ENCODE measurements at regions of chr7 and their contacts with region 1.

Region 1: DNA sequence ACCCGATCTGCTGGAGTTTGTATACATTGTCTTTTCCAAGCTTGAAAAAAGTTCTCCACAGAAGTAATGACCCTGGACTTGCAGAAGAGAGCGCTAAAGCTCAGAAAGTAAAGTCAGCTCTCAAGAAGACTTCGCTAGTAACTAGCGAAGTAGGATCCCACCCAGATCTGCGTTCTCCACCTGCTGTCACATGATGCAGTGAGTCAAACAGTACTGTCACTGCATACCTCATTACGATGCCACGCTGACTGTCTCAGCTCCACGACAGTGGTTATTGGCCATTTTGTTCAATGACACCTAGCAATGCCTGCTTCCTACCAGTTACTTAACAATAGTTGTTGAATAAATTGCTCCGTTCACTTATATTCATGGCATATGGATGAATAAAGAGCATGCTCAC is 29.7 kb upstream of the SEC61G start:
- DNase-seq: peak; percentile 95
- ATAC-seq: peak; percentile 95
- H3K4me3 ChIP-seq: 0 out of 2 replicates have a peak overlapping the region, but pooled peaks have one; percentile 20
- H3K27ac ChIP-seq: peak overlapping the region; percentile 60
- H3K4me1 ChIP-seq: peaks cover 22% of the 10 kb centered on the region
- H3K27me3 ChIP-seq: no peaks in the 10 kb centered on the region
- CTCF ChIP-seq: peak; percentile 87

Region 2: GRCh38 chr7:54773472-54774399 is 14.9 kb before region 1 on chr7:
- CTCF ChIA-PET with region 1: no interaction called
- POLR2A ChIA-PET with region 1: no interaction called
- intact Hi-C with region 1: loop called (anchors 1 kb)
- DNase-seq: peak; percentile 94
- ATAC-seq: peak; percentile 88
- H3K4me3 ChIP-seq: peak overlapping the region; percentile 67
- H3K27ac ChIP-seq: peak overlapping the region; percentile 54
- H3K4me1 ChIP-seq: peaks cover 21% of the 10 kb centered on the region
- H3K27me3 ChIP-seq: no peaks in the 10 kb centered on the region
- CTCF ChIP-seq: peak; percentile 86

Region 3: DNA sequence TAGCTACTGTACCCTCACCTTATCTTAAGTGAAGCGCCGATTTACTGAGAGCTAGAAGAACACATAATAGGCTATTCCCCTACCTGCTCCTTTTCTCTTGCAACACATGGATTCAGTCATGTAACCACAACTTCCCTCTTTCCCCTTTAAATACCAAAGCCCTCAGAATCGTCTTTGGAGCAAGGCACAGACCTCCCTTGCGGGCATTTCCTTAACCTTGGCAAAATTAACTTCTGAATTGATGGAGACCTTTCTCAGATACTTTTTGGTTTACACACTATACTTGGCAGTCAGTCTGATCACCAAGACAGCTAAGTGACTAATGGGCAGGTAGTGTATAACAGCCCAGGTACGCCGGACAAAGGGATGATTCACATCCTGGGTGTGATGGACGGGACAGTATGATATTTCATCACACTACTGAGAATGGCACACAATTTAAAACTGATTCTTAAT is 43.0 kb after region 1 on chr7:
- CTCF ChIA-PET with region 1: interaction called, 3 read pairs
- POLR2A ChIA-PET with region 1: no interaction called
- intact Hi-C with region 1: loop called (anchors 2 kb)
- DNase-seq: peak; percentile 95
- ATAC-seq: peak; percentile 87
- H3K4me3 ChIP-seq: peak overlapping the region; percentile 60
- H3K27ac ChIP-seq: peak overlapping the region; percentile 100
- H3K4me1 ChIP-seq: peaks cover 31% of the 10 kb centered on the region
- H3K27me3 ChIP-seq: no peaks in the 10 kb centered on the region
- CTCF ChIP-seq: no peak

Region 4: GRCh38 chr7:54864663-54865062 is 76.0 kb after region 1 on chr7:
- CTCF ChIA-PET with region 1: no interaction called
- POLR2A ChIA-PET with region 1: no interaction called
- intact Hi-C with region 1: loop called (anchors 2 kb)
- DNase-seq: peak; percentile 69
- ATAC-seq: peak; percentile 82
- H3K4me3 ChIP-seq: no peak overlapping the region
- H3K27ac ChIP-seq: no peak overlapping the region; the same call in 1 of the 2 replicates
- H3K4me1 ChIP-seq: peaks cover 8% of the 10 kb centered on the region; the same call in 1 of the 2 replicates
- H3K27me3 ChIP-seq: no peaks in the 10 kb centered on the region
- CTCF ChIP-seq: no peak

Region 5: DNA sequence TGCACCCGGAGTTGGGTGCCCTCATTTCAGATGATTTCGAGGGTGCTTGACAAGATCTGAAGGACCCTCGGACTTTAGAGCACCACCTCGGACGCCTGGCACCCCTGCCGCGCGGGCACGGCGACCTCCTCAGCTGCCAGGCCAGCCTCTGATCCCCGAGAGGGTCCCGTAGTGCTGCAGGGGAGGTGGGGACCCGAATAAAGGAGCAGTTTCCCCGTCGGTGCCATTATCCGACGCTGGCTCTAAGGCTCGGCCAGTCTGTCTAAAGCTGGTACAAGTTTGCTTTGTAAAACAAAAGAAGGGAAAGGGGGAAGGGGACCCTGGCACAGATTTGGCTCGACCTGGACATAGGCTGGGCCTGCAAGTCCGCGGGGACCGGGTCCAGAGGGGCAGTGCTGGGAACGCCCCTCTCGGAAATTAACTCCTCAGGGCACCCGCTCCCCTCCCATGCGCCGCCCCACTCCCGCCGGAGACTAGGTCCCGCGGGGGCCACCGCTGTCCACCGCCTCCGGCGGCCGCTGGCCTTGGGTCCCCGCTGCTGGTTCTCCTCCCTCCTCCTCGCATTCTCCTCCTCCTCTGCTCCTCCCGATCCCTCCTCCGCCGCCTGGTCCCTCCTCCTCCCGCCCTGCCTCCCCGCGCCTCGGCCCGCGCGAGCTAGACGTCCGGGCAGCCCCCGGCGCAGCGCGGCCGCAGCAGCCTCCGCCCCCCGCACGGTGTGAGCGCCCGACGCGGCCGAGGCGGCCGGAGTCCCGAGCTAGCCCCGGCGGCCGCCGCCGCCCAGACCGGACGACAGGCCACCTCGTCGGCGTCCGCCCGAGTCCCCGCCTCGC is 229.9 kb after region 1 on chr7 and contains the start of gene EGFR:
- CTCF ChIA-PET with region 1: interaction called, 3 read pairs
- POLR2A ChIA-PET with region 1: no interaction called
- intact Hi-C with region 1: loop called (anchors 2 kb)
- DNase-seq: peak; percentile 76
- ATAC-seq: peak; percentile 80
- H3K4me3 ChIP-seq: peak within 1 kb of the TSS; percentile 90
- H3K27ac ChIP-seq: peak within 1 kb of the TSS; percentile 69
- H3K4me1 ChIP-seq: peaks cover 27% of the 10 kb centered on the region
- H3K27me3 ChIP-seq: no peaks in the 10 kb centered on the region
- CTCF ChIP-seq: no peak
- total RNA-seq, gene EGFR: 50.0 and 64.6 TPM in 2 replicates

Region 6: DNA sequence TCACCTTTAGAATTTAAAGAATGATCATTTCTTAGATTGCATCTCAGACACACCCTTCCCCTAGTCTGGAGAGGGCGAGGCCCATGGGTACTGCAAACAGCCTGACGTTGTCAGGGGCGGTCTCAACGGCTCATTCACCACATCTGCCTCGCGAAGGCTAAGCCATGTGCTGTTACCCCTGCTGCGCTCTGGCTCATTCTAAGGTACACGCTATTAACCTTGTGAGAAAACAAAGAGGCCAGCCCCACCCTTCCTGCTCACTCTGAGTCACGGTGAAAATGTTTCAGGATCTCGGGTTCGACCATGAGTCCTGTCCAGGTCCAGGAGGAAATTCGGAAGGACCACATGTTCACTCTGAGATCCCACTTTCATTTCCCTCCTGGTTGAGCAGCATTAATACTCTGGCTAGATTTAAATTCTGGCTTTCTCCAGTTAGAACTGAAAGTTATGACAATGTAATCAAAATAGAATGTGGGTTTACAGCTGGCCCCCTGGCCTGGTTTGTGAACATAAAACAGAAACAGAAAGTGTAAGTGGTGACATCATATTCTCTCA is 285.4 kb after region 1 on chr7:
- CTCF ChIA-PET with region 1: interaction called, 9 read pairs
- POLR2A ChIA-PET with region 1: no interaction called
- intact Hi-C with region 1: loop called (anchors 5 kb)
- DNase-seq: peak; percentile 98
- ATAC-seq: peak; percentile 98
- H3K4me3 ChIP-seq: peak overlapping the region; percentile 48; the same call in 1 of the 2 replicates
- H3K27ac ChIP-seq: peak overlapping the region; percentile 97
- H3K4me1 ChIP-seq: peaks cover 38% of the 10 kb centered on the region
- H3K27me3 ChIP-seq: no peaks in the 10 kb centered on the region
- CTCF ChIP-seq: no peak